ENCODE measurements at regions of chr10 and their contacts with region 1.

Region 1: GRCh38 chr10:73096449-73097304 is at the start of gene P4HA1:
- DNase-seq: peak; percentile 96
- H3K4me3 Mint-ChIP-seq: peak within 1 kb of the TSS; percentile 83
- H3K27ac Mint-ChIP-seq: peak within 1 kb of the TSS; percentile 93
- H3K4me1 Mint-ChIP-seq: peaks cover 32% of the 10 kb centered on the region
- H3K27me3 Mint-ChIP-seq: no peaks in the 10 kb centered on the region
- total RNA-seq, gene P4HA1: 15.3 to 15.9 TPM

Region 2: DNA sequence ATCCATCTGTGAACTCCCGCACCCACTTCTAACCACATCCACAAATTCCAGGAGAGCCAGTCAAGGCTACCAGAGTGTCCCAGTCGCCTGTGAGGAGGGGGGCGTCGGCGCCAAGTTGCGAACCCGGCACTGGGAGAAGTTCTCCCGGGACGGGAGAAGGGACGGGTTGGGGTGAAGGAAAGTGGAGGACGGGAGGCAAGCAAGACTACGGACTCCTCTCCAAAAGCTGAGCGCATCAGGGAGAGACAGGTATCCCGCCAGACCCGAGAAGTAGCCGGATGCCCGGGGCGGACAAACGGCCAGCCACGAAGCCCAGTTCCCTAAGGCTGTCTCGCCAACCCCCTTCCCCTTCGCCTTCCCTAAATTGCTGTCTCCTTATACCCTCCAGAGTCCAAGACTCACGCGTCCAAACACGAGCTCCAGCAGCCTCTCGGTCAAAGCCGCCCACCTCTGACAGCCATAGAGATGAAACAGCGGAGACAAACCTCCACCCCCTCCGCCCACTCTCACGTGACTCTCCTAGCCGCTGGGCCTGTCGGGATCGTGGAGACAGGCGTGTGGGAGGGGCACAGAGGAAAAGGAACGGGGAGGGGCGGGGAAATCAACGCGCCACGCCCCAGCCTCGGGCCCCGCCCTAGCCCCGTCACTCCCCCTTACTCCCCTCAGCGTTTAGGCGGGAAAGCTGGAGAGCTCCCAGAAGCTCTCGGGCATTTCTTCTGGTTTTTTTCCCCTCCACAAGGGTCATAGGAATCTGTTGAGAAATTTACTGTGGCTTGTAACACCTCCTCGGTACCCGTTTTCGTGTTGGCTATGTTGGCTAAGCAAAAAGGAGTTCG is 470.9 kb before region 1 on chr10 and contains the start of gene MICU1:
- CTCF ChIA-PET with region 1: no interaction called
- intact Hi-C with region 1: loop called (anchors 2 kb)
- DNase-seq: peak; percentile 98
- H3K4me3 Mint-ChIP-seq: peak within 1 kb of the TSS; percentile 97
- H3K27ac Mint-ChIP-seq: peak within 1 kb of the TSS; percentile 73
- H3K4me1 Mint-ChIP-seq: peaks cover 16% of the 10 kb centered on the region
- H3K27me3 Mint-ChIP-seq: no peaks in the 10 kb centered on the region
- total RNA-seq, gene MICU1: 40.0 to 41.9 TPM

Region 3: DNA sequence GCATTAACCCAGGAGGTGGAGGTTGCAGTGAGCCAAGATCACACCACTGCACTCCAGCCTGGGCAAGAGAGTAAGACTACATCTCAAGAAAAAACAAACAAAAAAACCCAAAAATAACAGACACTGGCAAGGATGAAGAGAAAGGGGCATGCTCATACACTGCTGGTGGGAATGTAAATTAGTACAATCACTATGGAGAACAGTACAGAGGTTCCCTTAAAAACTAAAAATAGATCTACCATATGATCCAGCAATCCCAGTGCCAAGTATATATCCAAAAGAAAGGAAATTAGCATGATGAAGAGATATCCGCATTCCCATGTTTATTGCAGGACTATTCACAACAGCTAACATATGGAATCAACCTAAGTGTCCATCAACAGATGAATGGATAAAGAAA is 75.6 kb before region 1 on chr10:
- CTCF ChIA-PET with region 1: no interaction called
- intact Hi-C with region 1: no loop called
- DNase-seq: no peak
- H3K4me3 Mint-ChIP-seq: no peak overlapping the region
- H3K27ac Mint-ChIP-seq: no peak overlapping the region
- H3K4me1 Mint-ChIP-seq: peaks cover 13% of the 10 kb centered on the region
- H3K27me3 Mint-ChIP-seq: no peaks in the 10 kb centered on the region

Region 4: DNA sequence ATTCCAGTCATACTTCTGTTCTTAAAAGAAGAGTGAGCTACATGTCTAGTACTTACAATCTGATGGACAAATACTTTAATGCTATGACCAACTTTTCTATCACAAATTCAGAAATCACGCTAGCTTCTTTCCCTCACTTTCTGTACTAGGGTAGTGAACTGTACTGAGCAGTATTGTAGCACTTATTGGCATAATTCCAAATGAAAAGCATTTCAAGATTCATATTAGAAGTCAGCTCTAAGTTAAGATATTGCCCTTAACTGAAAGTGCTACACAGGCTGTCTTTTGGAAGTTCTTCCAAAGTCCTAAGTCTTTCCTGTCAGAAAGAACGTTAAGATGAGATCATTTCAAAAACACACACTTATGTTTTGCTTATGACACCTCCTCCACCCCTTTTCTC is 13.5 kb before region 1 on chr10:
- CTCF ChIA-PET with region 1: no interaction called
- intact Hi-C with region 1: no loop called
- DNase-seq: no peak
- H3K4me3 Mint-ChIP-seq: no peak overlapping the region
- H3K27ac Mint-ChIP-seq: no peak overlapping the region
- H3K4me1 Mint-ChIP-seq: peaks cover 6% of the 10 kb centered on the region
- H3K27me3 Mint-ChIP-seq: no peaks in the 10 kb centered on the region

Region 5: DNA sequence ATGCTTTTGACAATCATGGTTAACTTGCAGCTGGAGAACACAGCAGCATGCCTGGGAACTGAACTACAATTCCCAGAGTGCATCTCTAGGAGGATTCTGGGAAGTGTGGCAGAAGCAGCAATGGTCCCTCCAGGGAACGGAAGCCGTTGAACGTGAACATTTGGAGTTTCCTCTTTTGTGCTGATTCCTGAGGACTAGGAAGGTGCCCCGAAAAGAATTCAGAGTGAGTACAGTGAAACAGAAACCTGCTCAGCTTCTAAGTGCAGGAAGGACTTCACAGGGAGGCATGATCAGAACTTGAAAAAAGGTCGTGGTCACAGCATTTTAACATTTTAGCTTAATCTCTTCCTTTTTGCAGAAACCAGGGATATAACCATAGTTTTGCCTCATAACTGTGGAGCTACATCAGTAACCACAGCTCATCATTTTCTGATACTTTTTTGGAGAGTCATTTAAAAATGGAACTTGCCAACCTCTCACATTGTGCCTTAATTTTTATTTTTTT is 13.7 kb after region 1 on chr10 and contains the start of gene NUDT13:
- CTCF ChIA-PET with region 1: interaction called, 16 read pairs
- intact Hi-C with region 1: loop called (anchors 1 kb)
- DNase-seq: peak; percentile 65
- H3K4me3 Mint-ChIP-seq: peak within 1 kb of the TSS; percentile 84
- H3K27ac Mint-ChIP-seq: peak within 1 kb of the TSS; percentile 88
- H3K4me1 Mint-ChIP-seq: peaks cover 15% of the 10 kb centered on the region
- H3K27me3 Mint-ChIP-seq: no peaks in the 10 kb centered on the region
- total RNA-seq, gene NUDT13: 0.72 to 0.83 TPM

Region 6: GRCh38 chr10:73159038-73159648 is 62.5 kb after region 1 on chr10:
- CTCF ChIA-PET with region 1: interaction called, 10 read pairs
- intact Hi-C with region 1: loop called (anchors 1 kb)
- DNase-seq: peak; percentile 79
- H3K4me3 Mint-ChIP-seq: no peak overlapping the region
- H3K27ac Mint-ChIP-seq: no peak overlapping the region
- H3K4me1 Mint-ChIP-seq: peaks cover 34% of the 10 kb centered on the region
- H3K27me3 Mint-ChIP-seq: no peaks in the 10 kb centered on the region

Region 7: GRCh38 chr10:73358331-73359279 is 261.9 kb after region 1 on chr10 and contains the start of gene CFAP70:
- CTCF ChIA-PET with region 1: no interaction called
- intact Hi-C with region 1: loop called (anchors 2 kb)
- DNase-seq: peak; percentile 96
- H3K4me3 Mint-ChIP-seq: peak within 1 kb of the TSS; percentile 96
- H3K27ac Mint-ChIP-seq: peak within 1 kb of the TSS; percentile 74
- H3K4me1 Mint-ChIP-seq: peaks cover 10% of the 10 kb centered on the region
- H3K27me3 Mint-ChIP-seq: no peaks in the 10 kb centered on the region
- total RNA-seq, gene CFAP70: 0.20 to 0.31 TPM

Measured in activated naive CD4-positive, alpha-beta T cell treated with anti-CD3 and anti-CD28 coated beads for 36 hours (primary cell).